Psoas muscle (tissue), 8 donors: ENCODE measurements at regions of chr17 and their contacts with region 1.

Region 1: DNA sequence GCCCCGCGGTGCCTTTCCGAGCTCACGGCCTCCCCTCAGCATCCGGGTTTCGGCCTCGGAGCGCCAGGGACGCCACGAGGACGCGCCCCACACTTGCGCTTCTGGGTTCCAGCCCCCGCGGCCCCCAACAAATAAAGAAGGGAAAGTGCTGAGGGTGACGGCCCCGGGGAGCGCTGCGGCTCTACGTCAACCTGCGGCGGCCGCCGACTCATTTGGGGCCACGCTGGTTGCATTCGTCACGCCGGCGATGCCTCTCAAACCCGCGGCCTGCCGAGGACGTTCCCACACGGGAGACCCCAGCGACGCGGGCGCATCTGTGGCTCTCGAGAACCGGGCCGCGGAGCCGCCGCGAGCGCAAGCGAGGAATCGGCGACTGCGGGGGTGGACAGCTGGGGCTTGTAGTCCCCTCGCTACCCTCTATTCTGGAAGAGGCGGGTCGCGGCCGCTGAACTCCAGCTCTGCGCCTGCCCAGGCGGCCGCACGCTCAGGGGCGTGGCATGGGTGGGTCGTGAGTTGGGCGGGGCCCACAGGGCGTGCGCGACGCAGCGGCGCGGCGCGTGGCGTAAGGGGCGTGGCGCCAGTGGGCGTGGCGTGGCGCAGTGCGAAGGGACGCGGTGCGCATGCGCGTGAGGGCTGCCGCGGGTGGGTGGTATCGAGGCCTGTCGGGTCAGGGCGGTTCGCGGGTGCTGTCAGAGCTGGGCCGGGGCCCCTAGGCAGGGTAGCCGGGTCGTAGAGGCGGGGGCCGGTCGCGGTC is at the start of gene AMZ2:
- DNase-seq: peak; percentile 94 to 98
- ATAC-seq: peak; percentile 97 to 99 (median 98)
- H3K4me3 ChIP-seq: peak within 1 kb of the TSS; percentile 85
- H3K27ac ChIP-seq: peak within 1 kb of the TSS; percentile 94
- H3K4me1 ChIP-seq: peaks cover 15% of the 10 kb centered on the region
- H3K27me3 ChIP-seq: no peaks in the 10 kb centered on the region
- CTCF ChIP-seq: no peak
- total RNA-seq, gene AMZ2: 71.6 to 121 (median 91.8) TPM

Region 2: GRCh38 chr17:68172461-68172954 is 75.1 kb before region 1 on chr17:
- intact Hi-C with region 1: no loop called
- DNase-seq: peak; percentile 61 to 80
- ATAC-seq: peak; percentile 83 to 90 (median 86)
- H3K4me3 ChIP-seq: no peak overlapping the region
- H3K27ac ChIP-seq: no peak overlapping the region
- H3K4me1 ChIP-seq: no peaks in the 10 kb centered on the region
- H3K27me3 ChIP-seq: no peaks in the 10 kb centered on the region
- CTCF ChIP-seq: peak; percentile 98

Region 3: GRCh38 chr17:68205251-68205807 is 42.3 kb before region 1 on chr17:
- intact Hi-C with region 1: loop called in 1 of 2 experiments (anchors 5 kb)
- DNase-seq: peak; percentile 94 to 96
- ATAC-seq: peak; percentile 91 to 94 (median 92)
- H3K4me3 ChIP-seq: peak overlapping the region; percentile 85
- H3K27ac ChIP-seq: peak overlapping the region; percentile 71
- H3K4me1 ChIP-seq: peaks cover 12% of the 10 kb centered on the region
- H3K27me3 ChIP-seq: no peaks in the 10 kb centered on the region
- CTCF ChIP-seq: peak; percentile 92